ENCODE measurements at regions of chr12 and their contacts with region 1.

Region 1: DNA sequence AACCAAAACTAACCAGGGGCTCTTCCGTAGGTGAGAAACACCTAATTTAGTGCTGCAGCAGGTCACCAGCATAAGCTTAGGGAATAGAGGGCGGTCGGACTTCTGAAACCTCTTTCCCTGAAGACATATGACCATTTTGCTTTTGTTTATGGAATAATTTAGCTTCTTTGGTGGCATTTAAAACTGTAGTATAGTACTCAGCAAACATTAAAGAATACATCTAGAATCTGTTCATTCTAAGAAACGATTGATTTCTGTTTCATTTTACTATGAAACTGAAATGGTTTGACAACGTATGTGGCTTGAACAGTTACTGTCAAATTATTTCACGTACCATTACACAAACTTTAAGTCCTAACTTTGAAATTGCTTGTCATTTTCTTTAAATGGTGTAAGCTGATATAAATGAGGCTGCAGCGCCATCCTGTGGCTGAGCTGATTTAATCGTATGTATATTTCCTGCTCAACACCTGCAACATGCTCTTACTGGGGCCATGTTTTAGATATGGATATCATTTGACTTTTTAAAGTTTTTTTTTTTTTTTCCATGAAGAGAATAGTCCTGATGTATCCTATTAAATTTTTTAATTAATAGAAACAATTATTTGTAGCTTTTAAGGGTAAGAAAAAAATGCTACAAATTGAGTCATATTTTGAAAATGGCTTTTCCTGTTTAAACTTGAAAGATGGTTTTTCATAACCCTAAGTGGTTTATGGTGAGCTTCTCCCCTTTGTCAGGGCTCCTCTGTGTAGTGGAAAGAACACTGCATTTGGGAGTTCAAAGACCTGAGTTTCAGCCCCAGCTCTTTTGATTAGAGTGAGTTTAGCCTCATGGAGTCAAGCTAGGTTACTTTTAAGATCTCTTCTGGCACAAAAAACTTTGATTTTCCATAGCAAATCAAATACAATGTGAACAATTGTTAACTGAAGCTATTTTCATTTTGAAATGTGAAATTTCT is 27.4 kb downstream of the CFAP54 start:
- DNase-seq: peak; percentile 85 to 90
- H3K4me3 ChIP-seq: no peak overlapping the region
- H3K27ac ChIP-seq: peak overlapping the region in 1 of 5 donors; percentile 14
- H3K4me1 ChIP-seq: peaks cover 0 to 5% (median 2%) of the 10 kb centered on the region in 4 donors
- H3K27me3 ChIP-seq: no peaks in the 10 kb centered on the region
- CTCF ChIP-seq: peak in 5 of 7 experiments; percentile 21 to 77 (median 68)
- EP300 ChIP-seq: no peak
- POLR2A ChIP-seq: no peak

Region 2: GRCh38 chr12:96061864-96062453 is 454.8 kb before region 1 on chr12:
- intact Hi-C with region 1: loop called (anchors 5 kb)
- DNase-seq: peak; percentile 82 to 93
- H3K4me3 ChIP-seq: no peak overlapping the region
- H3K27ac ChIP-seq: no peak overlapping the region
- H3K4me1 ChIP-seq: peaks cover 0 to 7% (median 2%) of the 10 kb centered on the region in 4 donors
- H3K27me3 ChIP-seq: no peaks in the 10 kb centered on the region
- CTCF ChIP-seq: peak in 6 of 7 experiments; percentile 66 to 96 (median 82)
- EP300 ChIP-seq: no peak
- POLR2A ChIP-seq: no peak

Region 3: GRCh38 chr12:96120359-96121100 is 396.2 kb before region 1 on chr12:
- intact Hi-C with region 1: no loop called
- DNase-seq: peak in 1 of 2 donors; percentile 33
- H3K4me3 ChIP-seq: no peak overlapping the region
- H3K27ac ChIP-seq: no peak overlapping the region
- H3K4me1 ChIP-seq: no peaks in the 10 kb centered on the region
- H3K27me3 ChIP-seq: no peaks in the 10 kb centered on the region
- CTCF ChIP-seq: no peak
- EP300 ChIP-seq: no peak
- POLR2A ChIP-seq: no peak

Region 4: GRCh38 chr12:96219698-96220206 is 297.0 kb before region 1 on chr12:
- intact Hi-C with region 1: loop called (anchors 10 kb)
- DNase-seq: no peak
- H3K4me3 ChIP-seq: no peak overlapping the region
- H3K27ac ChIP-seq: no peak overlapping the region
- H3K4me1 ChIP-seq: peaks cover 9 to 42% (median 22%) of the 10 kb centered on the region in 4 donors
- H3K27me3 ChIP-seq: no peaks in the 10 kb centered on the region
- CTCF ChIP-seq: no peak
- EP300 ChIP-seq: no peak
- POLR2A ChIP-seq: no peak

Region 5: GRCh38 chr12:96889273-96889933 is 372.7 kb after region 1 on chr12:
- intact Hi-C with region 1: no loop called
- DNase-seq: no peak
- H3K4me3 ChIP-seq: no peak overlapping the region
- H3K27ac ChIP-seq: no peak overlapping the region
- H3K4me1 ChIP-seq: peaks cover 0 to 8% (median 0%) of the 10 kb centered on the region in 4 donors
- H3K27me3 ChIP-seq: no peaks in the 10 kb centered on the region
- CTCF ChIP-seq: no peak
- EP300 ChIP-seq: no peak
- POLR2A ChIP-seq: no peak

Measured in stomach (tissue), 19 donors.